ENCODE measurements at regions of chr22 and their contacts with region 1.

Region 1: GRCh38 chr22:25110846-25111578 is 88.6 kb upstream of the CRYBB3 start:
- DNase-seq: peak; percentile 87
- H3K4me3 ChIP-seq: peak overlapping the region; percentile 33 to 64 (median 57)
- H3K27ac ChIP-seq: peak overlapping the region; percentile 90
- H3K4me1 ChIP-seq: peaks cover 53% of the 10 kb centered on the region
- H3K27me3 ChIP-seq: no peaks in the 10 kb centered on the region
- CTCF ChIP-seq: peak; percentile 32 to 69

Region 2: DNA sequence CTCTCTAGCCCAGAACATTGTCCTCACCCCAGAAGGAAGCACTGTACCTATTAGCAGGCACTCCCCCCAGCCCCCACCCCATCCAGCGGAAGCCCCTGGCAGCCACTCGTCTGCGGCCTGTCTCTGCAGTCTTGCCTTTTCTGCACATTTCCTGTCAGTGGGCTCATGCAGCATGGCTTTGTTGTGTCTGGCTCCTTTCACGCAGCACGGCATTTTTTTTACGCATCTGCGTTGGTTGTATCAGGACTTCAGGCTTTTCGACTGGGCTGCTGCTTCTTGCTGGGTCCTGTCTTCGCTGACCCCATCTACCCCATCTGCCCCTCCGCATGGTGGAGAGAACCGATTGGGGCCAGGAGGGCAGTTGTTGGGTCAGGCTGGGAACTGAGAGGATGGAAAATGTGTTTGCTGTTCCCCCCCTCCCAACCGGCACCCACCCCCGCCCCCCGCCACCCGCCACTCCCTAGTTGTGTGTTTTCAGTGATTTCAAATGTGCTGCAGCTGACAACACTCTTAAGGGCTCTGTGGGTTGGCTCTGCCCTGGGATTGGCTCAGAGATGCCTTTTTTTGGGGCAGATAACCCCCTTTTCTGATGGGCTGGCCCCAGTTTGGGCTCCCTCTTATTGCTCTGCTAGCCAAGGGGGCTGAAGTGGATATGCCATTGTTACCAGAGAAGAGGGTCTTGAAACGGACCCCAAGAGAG is 48.5 kb before region 1 on chr22:
- CTCF ChIA-PET with region 1: no interaction called
- dilution Hi-C with region 1: no loop called
- in situ Hi-C with region 1: no loop called
- intact Hi-C with region 1: no loop called
- DNase-seq: no peak
- H3K4me3 ChIP-seq: no peak overlapping the region
- H3K27ac ChIP-seq: no peak overlapping the region
- H3K4me1 ChIP-seq: peaks cover 17% of the 10 kb centered on the region
- H3K27me3 ChIP-seq: no peaks in the 10 kb centered on the region
- CTCF ChIP-seq: no peak

Region 3: GRCh38 chr22:25076336-25076735 is 34.7 kb before region 1 on chr22:
- CTCF ChIA-PET with region 1: no interaction called
- dilution Hi-C with region 1: loop called (anchors 5 kb)
- in situ Hi-C with region 1: no loop called
- intact Hi-C with region 1: no loop called
- DNase-seq: no peak
- H3K4me3 ChIP-seq: no peak overlapping the region
- H3K27ac ChIP-seq: no peak overlapping the region
- H3K4me1 ChIP-seq: no peaks in the 10 kb centered on the region
- H3K27me3 ChIP-seq: no peaks in the 10 kb centered on the region
- CTCF ChIP-seq: no peak

Region 4: GRCh38 chr22:25153961-25154666 is 43.1 kb after region 1 on chr22:
- CTCF ChIA-PET with region 1: no interaction called
- dilution Hi-C with region 1: loop called (anchors 5 kb)
- in situ Hi-C with region 1: no loop called
- intact Hi-C with region 1: no loop called
- DNase-seq: peak; percentile 92
- H3K4me3 ChIP-seq: no peak overlapping the region
- H3K27ac ChIP-seq: peak overlapping the region; percentile 23
- H3K4me1 ChIP-seq: peaks cover 20% of the 10 kb centered on the region
- H3K27me3 ChIP-seq: no peaks in the 10 kb centered on the region
- CTCF ChIP-seq: no peak

Region 5: DNA sequence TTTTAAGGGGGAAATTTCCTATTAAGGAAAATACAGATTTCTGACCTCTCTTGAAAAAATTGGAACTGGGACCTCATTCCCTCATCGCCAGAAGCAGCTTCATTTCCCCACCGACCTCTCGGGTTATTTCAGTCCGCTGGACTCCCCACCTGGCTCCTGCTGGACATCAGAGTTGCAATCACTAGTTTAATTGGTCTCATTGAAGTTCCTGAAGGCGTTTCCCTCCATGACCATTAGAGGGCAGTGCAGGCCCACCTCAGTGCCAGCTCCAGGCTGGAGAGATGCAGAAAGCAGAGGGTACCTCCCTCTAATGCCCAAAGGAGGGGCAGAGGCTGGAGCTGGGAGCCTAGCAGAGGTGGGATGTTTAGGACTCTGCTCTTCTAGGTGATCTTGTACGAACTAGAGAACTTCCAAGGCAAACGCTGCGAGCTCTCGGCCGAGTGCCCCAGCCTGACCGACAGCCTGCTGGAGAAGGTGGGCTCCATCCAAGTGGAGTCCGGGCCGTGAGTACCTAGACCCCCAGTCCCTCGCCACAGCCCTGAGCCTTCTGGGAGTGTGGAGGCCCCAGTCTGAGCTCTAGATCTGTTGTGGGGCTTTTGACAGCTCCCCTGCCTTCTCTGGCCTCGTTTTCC is 91.4 kb after region 1 on chr22:
- CTCF ChIA-PET with region 1: no interaction called
- dilution Hi-C with region 1: loop called (anchors 5 kb)
- in situ Hi-C with region 1: no loop called
- intact Hi-C with region 1: no loop called
- DNase-seq: peak; percentile 33
- H3K4me3 ChIP-seq: no peak overlapping the region
- H3K27ac ChIP-seq: no peak overlapping the region
- H3K4me1 ChIP-seq: no peaks in the 10 kb centered on the region
- H3K27me3 ChIP-seq: no peaks in the 10 kb centered on the region
- CTCF ChIP-seq: peak; percentile 84 to 92

Measured in mammary epithelial cell (primary cell).